ENCODE measurements at regions of chr14 and their contacts with region 1.

Region 1: GRCh38 chr14:22556990-22557623 is 31.9 kb downstream of the DAD1 start:
- DNase-seq: peak; percentile 84 to 94 (median 90)
- H3K4me3 ChIP-seq: peak overlapping the region; percentile 69
- H3K4me3 Mint-ChIP-seq: peak overlapping the region; percentile 84 to 94 (median 89)
- H3K27ac ChIP-seq: peak overlapping the region; percentile 92
- H3K27ac Mint-ChIP-seq: peak overlapping the region; percentile 98 to 100 (median 99)
- H3K4me1 ChIP-seq: peaks cover 91% of the 10 kb centered on the region
- H3K4me1 Mint-ChIP-seq: peaks cover 88 to 97% (median 96%) of the 10 kb centered on the region in 3 donors
- H3K27me3 ChIP-seq: no peaks in the 10 kb centered on the region
- H3K27me3 Mint-ChIP-seq: peaks cover 0 to 8% of the 10 kb centered on the region in 2 donors

Region 2: DNA sequence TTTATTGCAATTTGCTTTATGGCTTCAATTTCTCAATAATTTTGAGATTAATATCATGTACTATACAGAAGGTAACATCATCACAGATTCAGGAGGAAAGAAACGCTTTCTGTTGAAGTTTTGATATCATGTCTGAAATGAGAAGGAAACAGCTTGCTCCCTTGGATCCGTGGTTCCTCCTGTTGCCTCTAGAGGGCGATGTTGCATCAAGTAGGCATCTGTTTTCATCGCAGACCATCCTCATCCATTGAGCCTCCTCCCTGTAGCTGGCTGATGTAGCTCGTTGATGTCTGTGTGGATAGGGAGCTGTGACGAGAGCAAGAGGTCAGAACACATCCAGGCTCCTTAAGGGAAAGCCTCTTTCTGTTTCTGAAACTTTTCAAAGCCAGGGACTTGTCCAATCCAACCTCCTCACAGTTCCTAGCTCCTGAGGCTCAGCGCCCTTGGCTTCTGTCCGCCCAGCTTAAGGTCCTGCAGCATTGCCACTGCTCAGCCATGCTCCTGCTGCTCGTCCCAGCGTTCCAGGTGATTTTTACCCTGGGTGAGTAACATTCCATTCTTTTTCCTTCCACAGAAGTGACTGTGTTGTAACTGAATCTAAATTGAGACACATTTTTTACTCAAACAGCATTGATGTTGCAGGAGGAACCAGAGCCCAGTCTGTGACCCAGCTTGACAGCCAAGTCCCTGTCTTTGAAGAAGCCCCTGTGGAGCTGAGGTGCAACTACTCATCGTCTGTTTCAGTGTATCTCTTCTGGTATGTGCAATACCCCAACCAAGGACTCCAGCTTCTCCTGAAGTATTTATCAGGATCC is 578.7 kb before region 1 on chr14:
- CTCF ChIA-PET with region 1: interaction called, 10 read pairs
- POLR2A ChIA-PET with region 1: interaction called, 5 read pairs
- DNase-seq: peak; percentile 29 to 74 (median 41)
- H3K4me3 ChIP-seq: peak overlapping the region; percentile 15
- H3K4me3 Mint-ChIP-seq: peak overlapping the region; percentile 34 to 84 (median 70)
- H3K27ac ChIP-seq: no peak overlapping the region
- H3K27ac Mint-ChIP-seq: peak overlapping the region in 7 of 8 donors; percentile 17 to 86 (median 58)
- H3K4me1 ChIP-seq: no peaks in the 10 kb centered on the region
- H3K4me1 Mint-ChIP-seq: peaks cover 9 to 23% (median 9%) of the 10 kb centered on the region in 3 donors
- H3K27me3 ChIP-seq: no peaks in the 10 kb centered on the region
- H3K27me3 Mint-ChIP-seq: peaks cover 0 to 4% of the 10 kb centered on the region in 2 donors

Region 3: GRCh38 chr14:22456998-22457594 is 100.0 kb before region 1 on chr14:
- CTCF ChIA-PET with region 1: no interaction called
- POLR2A ChIA-PET with region 1: no interaction called
- DNase-seq: no peak
- H3K4me3 ChIP-seq: no peak overlapping the region
- H3K4me3 Mint-ChIP-seq: no peak overlapping the region
- H3K27ac ChIP-seq: no peak overlapping the region
- H3K27ac Mint-ChIP-seq: no peak overlapping the region
- H3K4me1 ChIP-seq: no peaks in the 10 kb centered on the region
- H3K4me1 Mint-ChIP-seq: no peaks in the 10 kb centered on the region
- H3K27me3 ChIP-seq: no peaks in the 10 kb centered on the region
- H3K27me3 Mint-ChIP-seq: no peaks in the 10 kb centered on the region

Region 4: GRCh38 chr14:22505697-22506377 is 51.3 kb before region 1 on chr14:
- CTCF ChIA-PET with region 1: interaction called, 10 read pairs
- POLR2A ChIA-PET with region 1: interaction called, 285 read pairs
- DNase-seq: no peak
- H3K4me3 ChIP-seq: peak overlapping the region; percentile 65
- H3K4me3 Mint-ChIP-seq: peak overlapping the region; percentile 89 to 98 (median 91)
- H3K27ac ChIP-seq: peak overlapping the region; percentile 14
- H3K27ac Mint-ChIP-seq: peak overlapping the region; percentile 92 to 100 (median 96)
- H3K4me1 ChIP-seq: peaks cover 48% of the 10 kb centered on the region
- H3K4me1 Mint-ChIP-seq: peaks cover 55 to 66% (median 62%) of the 10 kb centered on the region in 3 donors
- H3K27me3 ChIP-seq: no peaks in the 10 kb centered on the region
- H3K27me3 Mint-ChIP-seq: peaks cover 0 to 1% of the 10 kb centered on the region in 2 donors

Region 5: GRCh38 chr14:22519877-22520685 is 37.0 kb before region 1 on chr14:
- CTCF ChIA-PET with region 1: interaction called, 66 read pairs
- POLR2A ChIA-PET with region 1: interaction called, 285 read pairs
- DNase-seq: peak in 1 of 5 donors; percentile 43
- H3K4me3 ChIP-seq: peak overlapping the region; percentile 69
- H3K4me3 Mint-ChIP-seq: peak overlapping the region; percentile 88 to 95 (median 90)
- H3K27ac ChIP-seq: peak overlapping the region; percentile 38
- H3K27ac Mint-ChIP-seq: peak overlapping the region; percentile 90 to 98 (median 96)
- H3K4me1 ChIP-seq: peaks cover 100% of the 10 kb centered on the region
- H3K4me1 Mint-ChIP-seq: peaks cover 90 to 100% (median 98%) of the 10 kb centered on the region in 3 donors
- H3K27me3 ChIP-seq: no peaks in the 10 kb centered on the region
- H3K27me3 Mint-ChIP-seq: no peaks in the 10 kb centered on the region

Region 6: GRCh38 chr14:22536853-22537338 is 20.2 kb before region 1 on chr14:
- CTCF ChIA-PET with region 1: interaction called, 69 read pairs
- POLR2A ChIA-PET with region 1: interaction called, 258 read pairs
- DNase-seq: peak; percentile 52 to 90 (median 68)
- H3K4me3 ChIP-seq: peak overlapping the region; percentile 60
- H3K4me3 Mint-ChIP-seq: peak overlapping the region; percentile 81 to 93 (median 85)
- H3K27ac ChIP-seq: peak overlapping the region; percentile 36
- H3K27ac Mint-ChIP-seq: peak overlapping the region; percentile 88 to 100 (median 98)
- H3K4me1 ChIP-seq: peaks cover 99% of the 10 kb centered on the region
- H3K4me1 Mint-ChIP-seq: peaks cover 96 to 100% (median 100%) of the 10 kb centered on the region in 3 donors
- H3K27me3 ChIP-seq: no peaks in the 10 kb centered on the region
- H3K27me3 Mint-ChIP-seq: no peaks in the 10 kb centered on the region

Region 7: GRCh38 chr14:22653012-22653621 is 96.0 kb after region 1 on chr14:
- CTCF ChIA-PET with region 1: interaction called, 10 read pairs
- POLR2A ChIA-PET with region 1: interaction called, 3 read pairs
- DNase-seq: peak; percentile 23 to 66 (median 35)
- H3K4me3 ChIP-seq: no peak overlapping the region
- H3K4me3 Mint-ChIP-seq: no peak overlapping the region
- H3K27ac ChIP-seq: no peak overlapping the region
- H3K27ac Mint-ChIP-seq: peak overlapping the region in 3 of 8 donors; percentile 53 to 75 (median 55)
- H3K4me1 ChIP-seq: no peaks in the 10 kb centered on the region
- H3K4me1 Mint-ChIP-seq: no peaks in the 10 kb centered on the region
- H3K27me3 ChIP-seq: no peaks in the 10 kb centered on the region
- H3K27me3 Mint-ChIP-seq: peaks cover 0 to 1% of the 10 kb centered on the region in 2 donors

Region 8: GRCh38 chr14:22852940-22853767 is 296.0 kb after region 1 on chr14:
- CTCF ChIA-PET with region 1: interaction called, 15 read pairs
- POLR2A ChIA-PET with region 1: no interaction called
- DNase-seq: peak; percentile 79 to 91 (median 84)
- H3K4me3 ChIP-seq: peak overlapping the region; percentile 90
- H3K4me3 Mint-ChIP-seq: peak overlapping the region; percentile 25 to 87 (median 82)
- H3K27ac ChIP-seq: peak overlapping the region; percentile 67
- H3K27ac Mint-ChIP-seq: peak overlapping the region in 5 of 8 donors; percentile 18 to 95 (median 72)
- H3K4me1 ChIP-seq: peaks cover 15% of the 10 kb centered on the region
- H3K4me1 Mint-ChIP-seq: peaks cover 7 to 19% (median 16%) of the 10 kb centered on the region in 3 donors
- H3K27me3 ChIP-seq: peaks cover 6% of the 10 kb centered on the region
- H3K27me3 Mint-ChIP-seq: peaks cover 6 to 24% of the 10 kb centered on the region in 2 donors

Measured in CD8-positive, alpha-beta memory T cell (primary cell).